ENCODE measurements at regions of chr13 and their contacts with region 1.

Region 1: GRCh38 chr13:30673669-30674521 is 56.2 kb downstream of the USPL1 start:
- DNase-seq: peak; percentile 92
- H3K4me3 Mint-ChIP-seq: peak overlapping the region; percentile 81
- H3K27ac Mint-ChIP-seq: peak overlapping the region; percentile 76
- H3K4me1 Mint-ChIP-seq: peaks cover 13% of the 10 kb centered on the region
- H3K27me3 Mint-ChIP-seq: peaks cover 2% of the 10 kb centered on the region

Region 2: DNA sequence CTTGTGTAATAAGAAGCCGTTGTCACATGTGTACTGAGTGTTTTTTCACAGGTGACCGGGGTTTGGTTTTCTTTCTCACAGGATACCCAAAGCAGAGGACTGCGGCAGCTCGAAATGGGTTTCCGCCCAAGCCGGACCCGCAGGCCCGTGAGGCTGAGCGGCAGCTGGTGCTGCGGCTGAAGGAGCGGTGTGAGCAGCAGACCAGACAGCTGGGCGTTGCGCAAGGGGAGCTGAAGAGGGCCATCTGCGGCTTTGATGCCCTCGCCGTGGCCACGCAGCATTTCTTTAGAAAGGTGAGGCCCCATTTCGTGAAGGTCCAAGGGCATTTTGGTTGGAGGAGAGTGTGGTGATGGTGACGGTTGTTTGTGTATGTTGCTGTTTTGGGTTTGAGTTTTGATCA is 1314.7 kb before region 1 on chr13:
- CTCF ChIA-PET with region 1: no interaction called
- POLR2A ChIA-PET with region 1: no interaction called
- intact Hi-C with region 1: no loop called
- DNase-seq: no peak
- H3K4me3 Mint-ChIP-seq: no peak overlapping the region
- H3K27ac Mint-ChIP-seq: no peak overlapping the region
- H3K4me1 Mint-ChIP-seq: no peaks in the 10 kb centered on the region
- H3K27me3 Mint-ChIP-seq: peaks cover 9% of the 10 kb centered on the region

Region 3: GRCh38 chr13:30306762-30307193 is 367.1 kb before region 1 on chr13:
- CTCF ChIA-PET with region 1: no interaction called
- POLR2A ChIA-PET with region 1: no interaction called
- intact Hi-C with region 1: loop called (anchors 5 kb)
- DNase-seq: peak; percentile 94
- H3K4me3 Mint-ChIP-seq: peak overlapping the region; percentile 84
- H3K27ac Mint-ChIP-seq: peak overlapping the region; percentile 87
- H3K4me1 Mint-ChIP-seq: peaks cover 49% of the 10 kb centered on the region
- H3K27me3 Mint-ChIP-seq: no peaks in the 10 kb centered on the region

Region 4: GRCh38 chr13:30659980-30660379 is 13.9 kb before region 1 on chr13:
- CTCF ChIA-PET with region 1: no interaction called
- POLR2A ChIA-PET with region 1: no interaction called
- intact Hi-C with region 1: no loop called
- DNase-seq: no peak
- H3K4me3 Mint-ChIP-seq: no peak overlapping the region
- H3K27ac Mint-ChIP-seq: no peak overlapping the region
- H3K4me1 Mint-ChIP-seq: peaks cover 4% of the 10 kb centered on the region
- H3K27me3 Mint-ChIP-seq: no peaks in the 10 kb centered on the region

Measured in activated CD4-positive, alpha-beta memory T cell treated with anti-CD3 and anti-CD28 coated beads for 36 hours (primary cell).